Activated T-helper 1 cell treated with anti-CD3 and anti-CD28 coated beads, Interleukin-12 subunit alpha, Interleukin-12 subunit beta, Interleukin-2, Interleukin-4 antibody, amounts not matched to agents 30 ng/mL and 10 ng/mL and 1 ng/mL, durations not matched to agents 14 hours and 24 hours and 36 hours (primary cell): ENCODE measurements at regions of chr2 and their contacts with region 1.

Region 1: GRCh38 chr2:85302121-85302520 is 25.7 kb downstream of the TGOLN2 start:
- DNase-seq: no peak
- H3K4me3 Mint-ChIP-seq: no peak overlapping the region
- H3K27ac Mint-ChIP-seq: no peak overlapping the region
- H3K4me1 Mint-ChIP-seq: peaks cover 7% of the 10 kb centered on the region
- H3K27me3 Mint-ChIP-seq: peaks cover 16% of the 10 kb centered on the region

Region 2: GRCh38 chr2:84495539-84496146 is 806.5 kb before region 1 on chr2:
- intact Hi-C with region 1: loop called (anchors 2 kb)
- DNase-seq: peak; percentile 16
- H3K4me3 Mint-ChIP-seq: no peak overlapping the region
- H3K27ac Mint-ChIP-seq: no peak overlapping the region
- H3K4me1 Mint-ChIP-seq: peaks cover 7% of the 10 kb centered on the region
- H3K27me3 Mint-ChIP-seq: no peaks in the 10 kb centered on the region

Region 3: DNA sequence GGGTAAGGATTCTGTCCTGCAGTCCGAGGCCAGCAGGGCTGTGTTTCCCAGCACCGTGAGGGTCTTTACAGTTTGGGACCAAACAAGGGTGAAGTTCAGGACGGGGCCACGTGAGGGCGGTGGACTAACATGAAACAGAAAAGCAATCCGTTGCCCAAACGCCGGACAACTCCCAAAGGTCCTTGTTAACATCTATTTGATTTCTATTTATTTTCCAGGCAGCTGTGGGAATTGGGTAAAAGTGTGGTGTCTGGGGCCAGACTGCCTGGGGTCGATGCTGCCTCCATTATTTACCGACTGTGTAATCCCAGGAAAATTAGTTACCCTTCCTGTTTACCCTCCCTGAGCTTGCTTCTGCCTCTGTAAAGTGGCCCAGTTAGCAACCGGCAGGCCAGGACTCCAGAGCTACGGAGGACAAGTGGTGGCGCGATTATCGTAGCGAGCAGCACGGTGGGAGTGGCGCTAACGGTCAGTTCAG is 235.2 kb before region 1 on chr2:
- intact Hi-C with region 1: loop called (anchors 1 kb)
- DNase-seq: peak; percentile 5
- H3K4me3 Mint-ChIP-seq: peak overlapping the region; percentile 15
- H3K27ac Mint-ChIP-seq: no peak overlapping the region
- H3K4me1 Mint-ChIP-seq: peaks cover 8% of the 10 kb centered on the region
- H3K27me3 Mint-ChIP-seq: peaks cover 29% of the 10 kb centered on the region

Region 4: GRCh38 chr2:85181134-85181631 is 120.9 kb before region 1 on chr2:
- intact Hi-C with region 1: loop called (anchors 1 kb)
- DNase-seq: no peak
- H3K4me3 Mint-ChIP-seq: no peak overlapping the region
- H3K27ac Mint-ChIP-seq: no peak overlapping the region
- H3K4me1 Mint-ChIP-seq: peaks cover 11% of the 10 kb centered on the region
- H3K27me3 Mint-ChIP-seq: peaks cover 11% of the 10 kb centered on the region

Region 5: GRCh38 chr2:85266146-85267041 is 35.7 kb before region 1 on chr2:
- intact Hi-C with region 1: loop called (anchors 1 kb)
- DNase-seq: peak; percentile 47
- H3K4me3 Mint-ChIP-seq: no peak overlapping the region
- H3K27ac Mint-ChIP-seq: no peak overlapping the region
- H3K4me1 Mint-ChIP-seq: no peaks in the 10 kb centered on the region
- H3K27me3 Mint-ChIP-seq: peaks cover 9% of the 10 kb centered on the region

Region 6: DNA sequence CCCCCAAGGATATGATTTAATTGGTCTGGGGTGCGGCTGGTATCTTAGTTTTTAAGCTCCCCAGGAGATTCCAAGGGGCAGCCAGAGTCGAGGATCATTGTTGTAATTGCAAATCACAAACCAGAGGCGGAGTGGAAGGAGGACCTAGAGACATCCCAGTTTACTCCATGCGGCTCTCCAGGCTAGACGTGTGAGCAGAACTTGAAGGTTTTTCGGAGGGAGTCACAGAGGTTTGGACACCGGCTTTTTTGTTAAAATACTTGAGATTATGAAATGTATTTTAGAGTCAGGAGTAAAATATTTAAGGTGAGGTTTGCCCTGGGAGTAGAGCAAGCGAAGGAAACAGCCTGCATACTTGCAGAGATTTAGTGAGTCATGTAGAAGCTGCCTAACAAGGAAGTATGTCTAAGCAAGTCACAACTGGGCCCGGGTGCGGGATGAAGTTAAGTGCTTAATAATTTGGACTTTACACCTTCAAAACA is 13.8 kb before region 1 on chr2:
- intact Hi-C with region 1: loop called (anchors 1 kb)
- DNase-seq: no peak
- H3K4me3 Mint-ChIP-seq: no peak overlapping the region
- H3K27ac Mint-ChIP-seq: no peak overlapping the region
- H3K4me1 Mint-ChIP-seq: peaks cover 29% of the 10 kb centered on the region
- H3K27me3 Mint-ChIP-seq: no peaks in the 10 kb centered on the region